ENCODE measurements at regions of chr12 and their contacts with region 1.

Region 1: GRCh38 chr12:64759035-64759901 is at the start of gene GNS:
- H3K4me3 Mint-ChIP-seq: peak within 1 kb of the TSS; percentile 96
- H3K27ac Mint-ChIP-seq: peak within 1 kb of the TSS; percentile 88
- H3K4me1 Mint-ChIP-seq: peaks cover 52% of the 10 kb centered on the region
- H3K27me3 Mint-ChIP-seq: no peaks in the 10 kb centered on the region

Region 2: DNA sequence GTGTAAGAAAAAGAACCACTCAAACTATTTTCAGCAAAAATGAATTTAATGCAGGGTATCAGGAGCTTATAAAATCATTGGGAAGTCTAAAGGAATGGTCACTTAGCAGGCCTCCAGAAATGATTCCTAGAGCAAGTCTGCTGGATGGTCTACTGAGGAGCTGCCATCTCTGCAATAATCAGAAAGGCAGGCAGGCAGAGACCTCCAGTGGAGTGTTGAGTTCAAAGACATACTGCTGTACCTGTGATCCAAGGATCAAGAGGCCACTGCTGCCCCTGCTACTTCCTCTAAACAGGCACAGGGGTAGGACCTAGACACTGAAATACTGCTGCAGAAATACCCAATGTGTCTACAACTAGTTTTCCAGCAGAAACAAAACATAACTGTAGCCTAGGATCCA is 522.7 kb before region 1 on chr12:
- intact Hi-C with region 1: no loop called
- H3K4me3 Mint-ChIP-seq: no peak overlapping the region
- H3K27ac Mint-ChIP-seq: no peak overlapping the region
- H3K4me1 Mint-ChIP-seq: peaks cover 11% of the 10 kb centered on the region
- H3K27me3 Mint-ChIP-seq: peaks cover 2% of the 10 kb centered on the region

Region 3: GRCh38 chr12:64362721-64363300 is 396.5 kb before region 1 on chr12:
- intact Hi-C with region 1: no loop called
- H3K4me3 Mint-ChIP-seq: no peak overlapping the region
- H3K27ac Mint-ChIP-seq: no peak overlapping the region
- H3K4me1 Mint-ChIP-seq: no peaks in the 10 kb centered on the region
- H3K27me3 Mint-ChIP-seq: no peaks in the 10 kb centered on the region

Region 4: DNA sequence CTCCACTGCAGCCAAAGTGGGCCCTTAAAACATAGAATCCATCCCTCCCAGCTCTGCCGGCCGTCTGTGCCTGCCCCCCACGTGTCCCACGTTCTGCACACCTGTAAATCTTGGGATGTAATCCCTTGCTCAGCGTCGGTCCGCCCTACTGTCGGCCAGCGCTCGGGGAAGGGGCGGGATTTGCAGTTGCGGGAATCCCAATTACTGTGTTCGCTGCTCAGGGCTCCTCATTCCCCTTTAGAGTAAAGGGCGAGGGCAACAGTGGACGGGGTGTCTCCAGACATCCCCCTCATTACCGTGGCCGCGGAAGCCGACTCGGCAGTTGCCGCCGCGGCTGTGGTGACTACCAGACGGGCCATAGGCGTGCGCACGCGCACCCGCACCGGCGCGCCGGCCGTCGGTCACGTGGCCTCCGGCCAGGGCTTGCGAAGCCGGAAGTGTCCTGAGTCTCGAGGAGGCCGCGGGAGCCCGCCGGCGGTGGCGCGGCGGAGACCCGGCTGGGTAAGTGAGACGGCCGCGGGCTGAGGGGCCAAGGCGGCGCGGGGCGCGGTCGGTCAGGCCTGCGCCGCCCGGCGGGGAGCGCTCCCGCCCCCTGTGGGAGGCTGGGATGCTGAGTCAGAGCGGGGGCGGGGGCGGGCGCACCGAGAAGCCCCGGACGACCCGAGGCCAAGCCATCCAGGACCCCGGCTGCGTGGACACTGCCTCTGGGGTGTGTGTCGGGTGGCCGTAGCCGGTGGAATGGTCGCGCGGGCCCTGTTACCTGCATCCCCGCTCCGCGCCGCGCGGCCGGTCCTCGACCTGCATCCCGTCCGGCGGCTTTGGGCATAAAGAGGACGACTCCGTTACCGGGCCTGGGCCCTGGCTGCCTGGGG is 307.3 kb before region 1 on chr12 and contains the start of gene TBK1:
- intact Hi-C with region 1: loop called (anchors 10 kb)
- H3K4me3 Mint-ChIP-seq: peak within 1 kb of the TSS; percentile 90
- H3K27ac Mint-ChIP-seq: peak within 1 kb of the TSS; percentile 92
- H3K4me1 Mint-ChIP-seq: peaks cover 32% of the 10 kb centered on the region
- H3K27me3 Mint-ChIP-seq: no peaks in the 10 kb centered on the region

Region 5: GRCh38 chr12:64494998-64495729 is 264.1 kb before region 1 on chr12:
- intact Hi-C with region 1: no loop called
- H3K4me3 Mint-ChIP-seq: no peak overlapping the region
- H3K27ac Mint-ChIP-seq: no peak overlapping the region
- H3K4me1 Mint-ChIP-seq: peaks cover 2% of the 10 kb centered on the region
- H3K27me3 Mint-ChIP-seq: no peaks in the 10 kb centered on the region

Region 6: GRCh38 chr12:64610149-64610678 is 149.1 kb before region 1 on chr12 and contains the start of gene RASSF3:
- intact Hi-C with region 1: loop called (anchors 5 kb)
- H3K4me3 Mint-ChIP-seq: peak within 1 kb of the TSS; percentile 96
- H3K27ac Mint-ChIP-seq: peak within 1 kb of the TSS; percentile 95
- H3K4me1 Mint-ChIP-seq: peaks cover 38% of the 10 kb centered on the region
- H3K27me3 Mint-ChIP-seq: no peaks in the 10 kb centered on the region

Region 7: DNA sequence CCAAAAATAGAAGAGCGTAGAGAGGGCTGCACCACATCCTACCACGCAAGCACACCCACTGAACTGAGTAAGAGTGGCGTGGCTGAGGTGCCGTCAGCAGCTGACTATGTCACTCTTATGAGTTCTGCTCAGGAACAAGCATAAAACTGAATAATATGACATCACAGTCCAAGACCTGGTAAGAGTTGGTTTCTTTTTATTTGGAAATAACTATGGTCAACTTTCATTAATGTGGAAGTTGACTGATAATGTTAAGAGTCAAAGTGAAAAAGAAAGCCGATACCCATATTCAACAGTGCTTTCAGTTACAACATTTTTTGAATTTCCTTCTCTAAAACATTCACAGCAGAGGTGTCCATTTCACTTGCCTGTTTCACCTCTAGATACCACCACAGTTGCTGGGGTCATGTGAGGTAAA is 44.7 kb before region 1 on chr12:
- intact Hi-C with region 1: no loop called
- H3K4me3 Mint-ChIP-seq: no peak overlapping the region
- H3K27ac Mint-ChIP-seq: peak overlapping the region; percentile 46
- H3K4me1 Mint-ChIP-seq: peaks cover 33% of the 10 kb centered on the region
- H3K27me3 Mint-ChIP-seq: no peaks in the 10 kb centered on the region

Region 8: GRCh38 chr12:64744422-64745258 is 14.6 kb before region 1 on chr12:
- intact Hi-C with region 1: loop called (anchors 2 kb)
- H3K4me3 Mint-ChIP-seq: no peak overlapping the region
- H3K27ac Mint-ChIP-seq: peak overlapping the region; percentile 37
- H3K4me1 Mint-ChIP-seq: peaks cover 85% of the 10 kb centered on the region
- H3K27me3 Mint-ChIP-seq: no peaks in the 10 kb centered on the region

Region 9: GRCh38 chr12:64781280-64782190 is 22.3 kb after region 1 on chr12:
- intact Hi-C with region 1: loop called (anchors 2 kb)
- H3K4me3 Mint-ChIP-seq: peak overlapping the region; percentile 74
- H3K27ac Mint-ChIP-seq: peak overlapping the region; percentile 72
- H3K4me1 Mint-ChIP-seq: peaks cover 22% of the 10 kb centered on the region
- H3K27me3 Mint-ChIP-seq: peaks cover 52% of the 10 kb centered on the region